Calu3 (cell line): ENCODE measurements at regions of chr5 and their contacts with region 1.

Region 1: DNA sequence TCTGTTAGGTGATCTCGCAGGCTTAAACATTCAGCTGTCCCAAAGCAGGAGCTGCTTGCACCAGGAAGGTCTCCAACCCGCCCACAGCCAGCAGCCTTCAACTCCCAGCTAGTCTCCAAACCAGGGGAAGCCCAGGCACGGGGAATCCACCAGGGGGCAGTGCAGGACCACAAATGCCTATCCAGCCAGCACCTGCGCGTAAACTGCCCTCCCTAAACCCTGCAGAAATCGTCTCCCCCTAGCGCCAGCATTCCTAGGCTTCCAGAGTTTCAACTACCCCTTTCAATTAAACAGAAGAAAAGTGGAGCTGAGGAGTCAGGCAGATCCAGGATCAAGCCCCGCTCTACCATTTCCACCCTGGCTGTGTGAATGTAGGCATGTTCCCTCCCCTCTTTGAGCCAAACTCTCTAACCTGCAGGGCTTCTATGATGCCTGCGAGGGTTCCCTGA is 72.0 kb downstream of the HRH2 start:
- DNase-seq: peak; percentile 98
- H3K4me3 Mint-ChIP-seq: no peak overlapping the region
- H3K27ac Mint-ChIP-seq: no peak overlapping the region
- H3K4me1 Mint-ChIP-seq: no peaks in the 10 kb centered on the region
- H3K27me3 Mint-ChIP-seq: peaks cover 88% of the 10 kb centered on the region
- CTCF ChIP-seq: peak; percentile 99

Region 2: GRCh38 chr5:175861337-175862130 is 131.7 kb after region 1 on chr5:
- CTCF ChIA-PET with region 1: no interaction called
- intact Hi-C with region 1: no loop called
- DNase-seq: no peak
- H3K4me3 Mint-ChIP-seq: no peak overlapping the region
- H3K27ac Mint-ChIP-seq: no peak overlapping the region
- H3K4me1 Mint-ChIP-seq: no peaks in the 10 kb centered on the region
- H3K27me3 Mint-ChIP-seq: peaks cover 100% of the 10 kb centered on the region
- CTCF ChIP-seq: no peak

Region 3: GRCh38 chr5:175902026-175902425 is 172.2 kb after region 1 on chr5:
- CTCF ChIA-PET with region 1: interaction called, 3 read pairs
- intact Hi-C with region 1: loop called (anchors 2 kb)
- DNase-seq: no peak
- H3K4me3 Mint-ChIP-seq: no peak overlapping the region
- H3K27ac Mint-ChIP-seq: no peak overlapping the region
- H3K4me1 Mint-ChIP-seq: no peaks in the 10 kb centered on the region
- H3K27me3 Mint-ChIP-seq: no peaks in the 10 kb centered on the region
- CTCF ChIP-seq: no peak